ENCODE measurements at regions of chr2 and their contacts with region 1.

Region 1: DNA sequence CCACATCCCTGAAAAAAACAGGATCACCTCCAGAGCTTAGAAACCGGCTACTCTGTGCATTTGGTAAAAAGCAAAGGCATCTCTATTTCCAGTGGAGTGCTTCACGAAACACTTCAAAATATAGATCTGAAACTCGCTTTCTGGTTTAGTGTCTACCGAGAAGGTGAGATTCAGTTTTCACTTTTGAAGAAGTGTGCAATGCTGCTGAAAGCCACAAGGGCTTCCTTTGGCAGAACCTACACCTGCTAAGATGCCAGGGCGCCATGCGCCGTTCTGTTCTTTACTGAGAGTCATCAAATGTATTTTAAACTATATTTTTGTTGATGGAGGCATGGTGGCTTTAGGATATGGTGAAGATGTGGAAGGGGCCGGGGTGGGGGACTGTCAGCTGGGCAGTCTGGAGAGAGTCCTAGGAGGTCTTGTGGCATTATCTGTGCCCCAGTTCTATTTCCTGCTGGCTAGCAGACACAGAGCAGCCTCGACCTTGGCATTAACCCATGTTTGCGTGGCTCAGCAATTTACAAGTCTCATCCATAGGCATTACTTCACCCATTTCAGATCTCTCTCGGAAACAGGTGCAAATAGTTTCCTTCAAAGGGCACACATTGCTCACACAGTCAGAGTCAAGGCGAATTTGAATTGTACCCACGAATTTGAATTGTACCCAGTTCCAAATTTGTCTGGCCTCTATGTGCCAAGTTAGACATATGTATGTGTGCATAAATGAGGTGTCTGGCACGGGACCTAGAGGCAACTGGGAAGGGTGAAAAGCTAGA is 46.7 kb upstream of the KCNF1 start:
- DNase-seq: peak in 1 of 2 donors; percentile 52
- ATAC-seq: peak; percentile 67 to 84 (median 75)
- H3K4me3 ChIP-seq: no peak overlapping the region
- H3K4me3 Mint-ChIP-seq: peak overlapping the region; percentile 82
- H3K27ac ChIP-seq: peak overlapping the region; percentile 19
- H3K27ac Mint-ChIP-seq: peak overlapping the region; percentile 66 to 85
- H3K4me1 ChIP-seq: peaks cover 53% of the 10 kb centered on the region
- H3K4me1 Mint-ChIP-seq: peaks cover 41 to 48% of the 10 kb centered on the region in 2 donors
- H3K27me3 ChIP-seq: no peaks in the 10 kb centered on the region
- H3K27me3 Mint-ChIP-seq: no peaks in the 10 kb centered on the region
- CTCF ChIP-seq: peak; percentile 37

Region 2: GRCh38 chr2:10773821-10774341 is 91.2 kb before region 1 on chr2:
- intact Hi-C with region 1: no loop called
- DNase-seq: no peak
- ATAC-seq: no peak
- H3K4me3 ChIP-seq: no peak overlapping the region
- H3K4me3 Mint-ChIP-seq: no peak overlapping the region
- H3K27ac ChIP-seq: no peak overlapping the region
- H3K27ac Mint-ChIP-seq: no peak overlapping the region
- H3K4me1 ChIP-seq: no peaks in the 10 kb centered on the region
- H3K4me1 Mint-ChIP-seq: no peaks in the 10 kb centered on the region
- H3K27me3 ChIP-seq: no peaks in the 10 kb centered on the region
- H3K27me3 Mint-ChIP-seq: no peaks in the 10 kb centered on the region
- CTCF ChIP-seq: no peak

Region 3: DNA sequence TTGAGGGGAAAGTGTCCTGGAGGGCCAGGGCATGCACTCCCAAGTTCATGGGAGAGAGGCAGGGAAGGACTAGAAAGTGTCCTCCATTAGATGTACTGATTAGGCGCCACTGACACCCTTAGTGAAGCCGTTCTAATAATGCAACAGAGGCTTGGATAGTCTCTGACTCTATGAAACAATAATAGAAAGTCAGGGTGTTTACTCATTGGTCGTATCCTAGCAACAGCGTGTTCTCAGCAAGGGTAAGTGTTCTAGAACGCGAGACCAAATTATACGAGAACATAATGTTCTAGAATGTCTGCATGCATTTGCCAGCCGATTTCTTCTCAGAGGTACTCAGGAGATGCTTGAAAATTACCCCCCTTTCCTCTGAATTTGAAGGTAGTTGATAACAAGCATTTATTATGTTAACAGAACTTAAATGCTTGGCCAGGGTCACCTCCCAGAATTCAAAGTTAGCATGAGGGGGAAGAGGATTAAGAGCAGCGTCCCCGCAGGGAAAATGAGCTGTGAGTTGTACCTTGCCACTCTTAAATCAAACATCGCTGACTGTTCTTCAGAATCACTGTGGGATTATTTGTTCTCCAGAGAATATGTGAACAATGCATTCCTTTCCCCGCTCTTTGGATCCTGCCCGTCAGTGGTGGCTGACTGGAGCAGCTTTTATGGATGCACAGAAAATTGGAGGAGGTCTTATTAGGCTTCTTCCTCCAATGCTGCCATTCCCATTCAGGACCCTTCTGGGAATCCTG is 18.8 kb before region 1 on chr2:
- intact Hi-C with region 1: no loop called
- DNase-seq: no peak
- ATAC-seq: no peak
- H3K4me3 ChIP-seq: no peak overlapping the region
- H3K4me3 Mint-ChIP-seq: no peak overlapping the region
- H3K27ac ChIP-seq: no peak overlapping the region
- H3K27ac Mint-ChIP-seq: no peak overlapping the region
- H3K4me1 ChIP-seq: no peaks in the 10 kb centered on the region
- H3K4me1 Mint-ChIP-seq: no peaks in the 10 kb centered on the region
- H3K27me3 ChIP-seq: no peaks in the 10 kb centered on the region
- H3K27me3 Mint-ChIP-seq: peaks cover under 1 to 12% of the 10 kb centered on the region in 2 donors
- CTCF ChIP-seq: no peak

Region 4: DNA sequence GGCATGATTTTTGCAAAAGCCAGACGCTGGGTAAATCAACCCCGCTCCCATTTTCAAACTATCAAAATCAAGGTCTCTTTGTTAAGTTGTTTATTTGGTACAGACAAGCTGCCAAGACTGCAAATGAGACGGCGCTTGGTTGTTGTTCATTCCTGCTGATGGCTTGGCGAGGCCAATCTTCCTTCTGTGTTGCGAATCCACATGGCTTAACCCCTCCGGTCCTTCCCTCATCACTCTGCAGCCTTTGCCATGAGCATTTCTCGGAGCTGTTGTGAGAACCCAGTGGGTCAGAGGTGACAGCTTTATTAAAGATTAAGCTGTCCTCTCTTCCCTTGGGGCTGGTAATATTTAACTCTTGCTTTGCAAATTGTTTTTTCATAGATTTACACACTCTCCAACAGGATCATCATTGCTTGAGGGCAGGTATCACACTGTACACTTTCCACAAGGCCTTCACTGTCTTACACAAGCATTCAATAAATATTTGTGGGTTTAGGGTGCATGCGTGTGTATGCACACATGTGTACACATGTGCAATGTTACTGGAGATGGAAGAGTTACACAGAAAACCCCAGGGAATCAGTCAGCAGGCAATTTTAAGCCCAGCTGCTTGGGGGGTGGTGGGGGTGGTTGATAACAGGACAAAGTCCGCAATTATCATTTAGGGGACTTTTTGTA is 18.9 kb after region 1 on chr2:
- intact Hi-C with region 1: loop called (anchors 2 kb)
- DNase-seq: no peak
- ATAC-seq: no peak
- H3K4me3 ChIP-seq: no peak overlapping the region
- H3K4me3 Mint-ChIP-seq: no peak overlapping the region
- H3K27ac ChIP-seq: no peak overlapping the region
- H3K27ac Mint-ChIP-seq: peak overlapping the region in 1 of 2 donors; percentile 76
- H3K4me1 ChIP-seq: no peaks in the 10 kb centered on the region
- H3K4me1 Mint-ChIP-seq: peaks cover 0 to 43% of the 10 kb centered on the region in 2 donors
- H3K27me3 ChIP-seq: no peaks in the 10 kb centered on the region
- H3K27me3 Mint-ChIP-seq: peaks cover 3 to 6% of the 10 kb centered on the region in 2 donors
- CTCF ChIP-seq: no peak